ENCODE measurements at regions of chr14 and their contacts with region 1.

Region 1: DNA sequence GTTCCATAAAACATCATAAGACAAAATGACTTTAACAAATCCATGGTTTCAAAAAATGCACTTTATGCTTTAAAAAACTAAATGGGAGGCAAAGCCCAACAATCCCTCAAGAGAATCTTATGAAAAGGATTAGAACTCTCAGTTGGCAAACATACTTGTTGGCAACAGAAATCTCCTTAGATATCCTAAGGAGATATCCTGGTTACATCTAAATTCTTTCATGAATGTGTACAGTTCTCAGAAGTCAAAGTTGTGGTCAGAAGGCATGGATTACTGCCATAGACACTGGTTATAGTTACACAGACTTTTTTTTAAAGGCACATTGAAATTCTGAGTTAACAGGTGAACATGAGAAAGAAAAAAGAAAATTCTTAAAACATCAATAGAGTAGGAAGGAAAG is 17.5 kb upstream of the ISM2 start:
- DNase-seq: no peak
- ATAC-seq: no peak
- H3K4me3 ChIP-seq: no peak overlapping the region
- H3K27ac ChIP-seq: no peak overlapping the region
- H3K4me1 ChIP-seq: no peaks in the 10 kb centered on the region
- H3K27me3 ChIP-seq: no peaks in the 10 kb centered on the region
- CTCF ChIP-seq: no peak

Region 2: DNA sequence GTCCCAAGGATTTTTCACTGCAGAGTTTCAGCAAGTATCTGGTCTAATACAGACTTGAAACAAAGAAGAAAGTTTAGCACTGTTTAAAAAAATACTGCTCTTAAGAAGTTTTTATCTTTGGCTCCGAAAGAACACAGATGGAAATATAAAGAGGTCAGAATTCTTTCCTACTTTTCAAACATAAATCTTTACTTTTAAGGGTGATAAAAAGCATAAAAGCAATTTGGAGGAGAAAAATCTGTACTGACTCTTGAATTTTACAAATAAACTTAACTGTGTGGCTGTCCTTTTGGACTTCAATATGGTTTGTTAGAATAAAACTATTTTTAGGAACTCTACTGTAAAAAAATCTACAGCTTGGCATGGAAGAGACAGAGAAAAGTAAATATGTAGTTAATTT is 10.1 kb after region 1 on chr14:
- intact Hi-C with region 1: loop called in 1 of 10 experiments (anchors 1 kb)
- DNase-seq: no peak
- ATAC-seq: no peak
- H3K4me3 ChIP-seq: no peak overlapping the region
- H3K27ac ChIP-seq: no peak overlapping the region
- H3K4me1 ChIP-seq: no peaks in the 10 kb centered on the region
- H3K27me3 ChIP-seq: no peaks in the 10 kb centered on the region
- CTCF ChIP-seq: no peak